ENCODE measurements at regions of chr15 and their contacts with region 1.

Region 1: DNA sequence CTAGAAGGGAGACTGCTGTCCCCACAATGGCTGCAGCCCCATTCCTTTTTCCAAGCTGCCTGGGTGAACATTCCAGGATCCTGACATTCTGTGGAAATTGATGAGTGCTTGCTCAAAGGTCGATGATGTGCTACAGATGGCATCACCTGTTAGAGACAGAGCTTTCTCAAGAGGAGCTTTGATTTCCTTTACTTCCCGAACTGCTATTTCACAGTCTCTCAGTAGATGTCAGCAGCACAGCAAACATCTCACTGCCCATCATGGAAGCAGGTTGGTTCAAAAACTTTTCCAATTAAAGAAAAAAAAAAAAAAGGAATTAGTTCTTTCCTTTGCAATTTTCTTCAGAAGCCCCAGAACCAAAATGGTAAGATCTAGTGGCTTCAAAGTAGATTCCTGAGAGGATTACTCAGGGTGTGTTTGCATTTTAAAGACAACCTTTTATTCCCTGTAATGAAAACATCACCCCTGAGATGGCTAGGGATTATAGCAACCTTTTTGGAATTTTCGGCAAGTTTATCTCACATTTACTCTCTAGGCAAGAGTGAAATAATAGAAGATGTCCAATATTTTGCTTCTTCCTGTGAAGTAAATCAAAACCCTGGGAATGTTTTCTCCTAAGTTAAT is 44.8 kb downstream of the POLR2M start:
- DNase-seq: peak in 1 of 35 experiments; percentile 5
- ATAC-seq: no peak
- H3K4me3 ChIP-seq: no peak overlapping the region
- H3K4me3 Mint-ChIP-seq: no peak overlapping the region
- H3K27ac ChIP-seq: no peak overlapping the region
- H3K27ac Mint-ChIP-seq: no peak overlapping the region
- H3K4me1 ChIP-seq: no peaks in the 10 kb centered on the region
- H3K4me1 Mint-ChIP-seq: peaks cover 0 to 6% (median 6%) of the 10 kb centered on the region in 3 donors
- H3K27me3 ChIP-seq: no peaks in the 10 kb centered on the region
- H3K27me3 Mint-ChIP-seq: no peaks in the 10 kb centered on the region

Region 2: GRCh38 chr15:56491110-56491722 is 1260.1 kb before region 1 on chr15:
- CTCF ChIA-PET with region 1: no interaction called
- POLR2A ChIA-PET with region 1: interaction called in 1 of 2 experiments, 12 read pairs
- DNase-seq: peak in 33 of 35 experiments; percentile 3 to 70 (median 30)
- ATAC-seq: peak in 3 of 4 experiments; percentile 55 to 61 (median 60)
- H3K4me3 ChIP-seq: no peak overlapping the region
- H3K4me3 Mint-ChIP-seq: no peak overlapping the region
- H3K27ac ChIP-seq: no peak overlapping the region
- H3K27ac Mint-ChIP-seq: no peak overlapping the region
- H3K4me1 ChIP-seq: no peaks in the 10 kb centered on the region
- H3K4me1 Mint-ChIP-seq: no peaks in the 10 kb centered on the region
- H3K27me3 ChIP-seq: peaks cover 0 to 9% of the 10 kb centered on the region in 2 experiments
- H3K27me3 Mint-ChIP-seq: peaks cover 3% of the 10 kb centered on the region in 2 donors

Region 3: DNA sequence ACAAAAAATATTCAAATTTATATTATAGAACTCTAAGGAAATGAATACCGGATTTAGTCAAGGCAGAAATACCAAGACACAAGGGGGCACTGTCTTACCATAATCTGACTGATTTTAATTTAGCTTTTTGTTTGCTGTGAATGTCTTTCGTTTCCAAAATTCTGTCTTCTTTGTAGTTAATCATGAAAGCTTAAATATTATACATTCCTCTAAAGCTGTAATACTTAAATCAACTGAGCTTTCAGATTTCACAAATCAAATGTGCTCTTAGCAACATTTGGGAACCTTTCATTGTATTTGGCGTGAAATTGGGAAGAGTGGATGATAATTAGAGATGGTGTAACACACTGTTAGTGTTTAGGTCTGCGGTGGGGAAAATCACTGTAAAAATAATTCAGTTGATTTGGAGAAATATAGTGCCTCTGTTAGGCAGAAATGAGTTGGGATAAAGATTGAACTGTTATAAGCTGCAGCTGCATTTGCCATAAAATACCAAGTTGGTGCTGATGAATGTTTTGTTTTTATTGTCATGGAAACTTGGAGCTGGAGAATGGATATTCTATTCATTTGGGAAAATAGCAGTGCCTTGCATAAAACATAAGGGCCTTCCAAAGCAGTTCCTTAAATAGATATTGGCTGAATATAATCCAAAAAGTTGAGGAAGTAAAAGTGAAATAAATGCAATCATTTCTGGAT is 604.6 kb before region 1 on chr15:
- CTCF ChIA-PET with region 1: no interaction called
- POLR2A ChIA-PET with region 1: no interaction called
- DNase-seq: peak in 1 of 35 experiments; percentile 50
- ATAC-seq: no peak
- H3K4me3 ChIP-seq: no peak overlapping the region
- H3K4me3 Mint-ChIP-seq: no peak overlapping the region
- H3K27ac ChIP-seq: no peak overlapping the region
- H3K27ac Mint-ChIP-seq: no peak overlapping the region
- H3K4me1 ChIP-seq: no peaks in the 10 kb centered on the region
- H3K4me1 Mint-ChIP-seq: peaks cover 9 to 16% (median 15%) of the 10 kb centered on the region in 3 donors
- H3K27me3 ChIP-seq: no peaks in the 10 kb centered on the region
- H3K27me3 Mint-ChIP-seq: no peaks in the 10 kb centered on the region

Region 4: DNA sequence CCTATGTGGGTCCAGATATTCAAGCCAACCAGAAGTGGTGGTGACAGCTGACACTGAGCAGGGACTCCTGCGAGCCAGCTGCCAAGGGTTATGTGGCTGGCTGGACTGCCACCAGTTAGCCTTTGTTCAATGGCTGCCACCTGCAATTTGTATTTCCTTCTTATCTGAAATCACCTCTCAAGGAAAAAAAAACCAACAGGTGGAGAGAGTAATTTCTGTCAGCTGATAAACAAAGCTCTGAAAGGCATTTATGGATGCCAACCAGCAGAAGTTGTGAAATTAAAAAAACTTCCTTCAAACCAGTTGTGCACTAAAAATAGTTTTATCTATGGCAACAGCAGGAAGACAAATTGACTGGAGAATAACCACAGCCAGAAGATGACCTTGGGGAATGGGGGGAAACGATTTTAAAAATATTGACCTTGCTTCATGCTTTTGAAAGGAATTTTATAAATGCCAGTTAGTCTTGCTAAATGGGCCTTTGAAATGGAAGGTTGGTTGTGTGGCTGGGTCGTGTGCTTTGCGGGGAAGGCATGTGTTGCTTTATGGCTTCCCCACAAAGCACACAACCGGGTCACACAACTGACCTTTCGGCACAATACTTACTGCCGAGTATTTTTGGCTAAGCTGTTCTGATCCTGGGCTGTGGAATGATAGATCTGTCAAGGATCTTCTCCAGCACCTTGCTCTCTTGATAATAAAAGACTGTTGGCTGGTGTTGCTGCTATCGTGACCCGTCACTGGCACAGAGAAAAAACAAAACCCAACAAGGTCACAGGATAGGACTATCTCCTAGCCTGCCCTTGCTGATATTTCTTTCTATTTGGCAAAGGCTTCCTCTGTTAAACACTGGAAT is 156.1 kb before region 1 on chr15:
- CTCF ChIA-PET with region 1: no interaction called
- POLR2A ChIA-PET with region 1: no interaction called
- DNase-seq: no peak
- ATAC-seq: no peak
- H3K4me3 ChIP-seq: no peak overlapping the region
- H3K4me3 Mint-ChIP-seq: no peak overlapping the region
- H3K27ac ChIP-seq: no peak overlapping the region
- H3K27ac Mint-ChIP-seq: no peak overlapping the region
- H3K4me1 ChIP-seq: peaks cover 0 to 13% of the 10 kb centered on the region in 2 experiments
- H3K4me1 Mint-ChIP-seq: peaks cover 7 to 15% (median 13%) of the 10 kb centered on the region in 3 donors
- H3K27me3 ChIP-seq: peaks cover 0 to 28% of the 10 kb centered on the region in 2 experiments
- H3K27me3 Mint-ChIP-seq: peaks cover 9 to 20% of the 10 kb centered on the region in 2 donors

Region 5: GRCh38 chr15:57654153-57654852 is 97.0 kb before region 1 on chr15:
- CTCF ChIA-PET with region 1: interaction called in 1 of 2 experiments, 12 read pairs
- POLR2A ChIA-PET with region 1: interaction called in 1 of 2 experiments, 3 read pairs
- DNase-seq: no peak
- ATAC-seq: no peak
- H3K4me3 ChIP-seq: no peak overlapping the region
- H3K4me3 Mint-ChIP-seq: no peak overlapping the region
- H3K27ac ChIP-seq: no peak overlapping the region
- H3K27ac Mint-ChIP-seq: no peak overlapping the region
- H3K4me1 ChIP-seq: no peaks in the 10 kb centered on the region
- H3K4me1 Mint-ChIP-seq: no peaks in the 10 kb centered on the region
- H3K27me3 ChIP-seq: peaks cover 0 to 2% of the 10 kb centered on the region in 2 experiments
- H3K27me3 Mint-ChIP-seq: peaks cover 2 to 3% of the 10 kb centered on the region in 2 donors

Measured in T-cell (primary cell).